Common myeloid progenitor, CD34-positive (primary cell): ENCODE measurements at regions of chr15 and their contacts with region 1.

Region 1: DNA sequence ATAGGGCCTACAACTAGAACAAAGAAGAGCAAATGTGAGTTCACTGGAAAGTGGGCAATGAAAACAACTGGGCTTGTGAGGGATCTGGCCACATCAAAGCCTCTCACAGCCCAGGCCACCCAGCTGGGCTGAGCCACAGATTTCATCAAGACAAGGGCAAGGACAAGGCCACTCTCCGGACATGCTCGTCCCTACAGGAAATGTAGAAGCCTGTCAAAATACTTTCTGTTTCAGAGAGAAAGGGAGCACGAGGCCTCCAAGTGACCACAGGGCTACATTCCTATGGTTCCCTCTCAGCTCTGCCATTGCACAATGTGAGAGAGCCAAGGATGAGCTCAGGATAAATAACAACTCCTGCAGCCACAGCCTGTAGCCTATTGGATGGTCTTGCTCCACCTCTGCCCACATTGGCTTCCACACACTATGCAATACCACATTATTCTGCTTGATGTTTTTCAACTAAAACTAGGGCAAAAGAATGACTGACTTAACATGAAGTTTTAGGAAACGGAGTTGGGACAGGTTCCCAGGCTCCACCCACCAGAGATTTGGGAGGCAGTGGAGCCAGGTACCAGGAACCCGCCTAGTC is 12.1 kb downstream of the TBC1D2B start:
- DNase-seq: peak in 2 of 3 donors; percentile 51 to 57
- H3K4me3 ChIP-seq: peak overlapping the region in 4 of 7 experiments; percentile 6 to 29 (median 24)
- H3K27ac ChIP-seq: no peak overlapping the region
- H3K4me1 ChIP-seq: peaks cover 17 to 89% (median 67%) of the 10 kb centered on the region in 4 experiments
- H3K27me3 ChIP-seq: no peaks in the 10 kb centered on the region

Region 2: DNA sequence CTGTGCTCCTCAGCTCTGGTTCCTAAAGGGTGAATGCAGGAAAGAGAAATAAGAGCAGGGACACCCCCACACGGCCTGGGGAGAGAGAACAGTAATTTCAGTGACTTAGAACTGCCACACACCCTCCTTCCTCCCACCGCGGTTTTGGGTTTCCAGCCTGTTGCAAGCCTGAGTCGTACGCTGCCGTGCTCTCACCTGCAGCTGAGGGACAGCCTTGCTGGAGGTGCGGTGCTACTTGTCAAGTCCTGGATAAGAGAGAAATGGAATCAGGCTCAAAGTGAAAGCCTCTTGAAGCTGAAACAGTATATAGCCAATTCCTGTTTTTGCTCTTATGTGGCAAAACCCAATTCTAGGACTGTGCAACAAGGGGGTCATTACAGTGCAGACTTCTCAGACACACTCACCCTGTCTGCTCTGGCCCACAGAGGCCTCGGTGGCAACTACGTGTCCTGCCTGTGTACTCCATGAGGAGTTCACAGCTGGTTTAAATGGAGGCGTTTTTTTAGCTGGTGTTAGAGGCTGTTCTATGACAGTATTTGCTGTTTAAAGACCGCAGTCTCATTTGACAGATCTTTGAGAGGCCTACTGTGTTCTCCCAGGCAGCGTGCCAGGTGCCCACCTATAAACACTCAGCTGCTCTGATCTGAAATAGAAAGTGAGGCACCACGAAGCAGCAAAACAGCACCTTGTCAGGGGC is 30.7 kb before region 1 on chr15:
- CTCF ChIA-PET with region 1: interaction called, 15 read pairs
- POLR2A ChIA-PET with region 1: interaction called, 4 read pairs
- DNase-seq: peak; percentile 48 to 81 (median 71)
- H3K4me3 ChIP-seq: peak overlapping the region in 5 of 7 experiments; percentile 8 to 60 (median 38)
- H3K27ac ChIP-seq: peak overlapping the region; percentile 25 to 64
- H3K4me1 ChIP-seq: peaks cover 47 to 84% (median 74%) of the 10 kb centered on the region in 4 experiments
- H3K27me3 ChIP-seq: no peaks in the 10 kb centered on the region

Region 3: DNA sequence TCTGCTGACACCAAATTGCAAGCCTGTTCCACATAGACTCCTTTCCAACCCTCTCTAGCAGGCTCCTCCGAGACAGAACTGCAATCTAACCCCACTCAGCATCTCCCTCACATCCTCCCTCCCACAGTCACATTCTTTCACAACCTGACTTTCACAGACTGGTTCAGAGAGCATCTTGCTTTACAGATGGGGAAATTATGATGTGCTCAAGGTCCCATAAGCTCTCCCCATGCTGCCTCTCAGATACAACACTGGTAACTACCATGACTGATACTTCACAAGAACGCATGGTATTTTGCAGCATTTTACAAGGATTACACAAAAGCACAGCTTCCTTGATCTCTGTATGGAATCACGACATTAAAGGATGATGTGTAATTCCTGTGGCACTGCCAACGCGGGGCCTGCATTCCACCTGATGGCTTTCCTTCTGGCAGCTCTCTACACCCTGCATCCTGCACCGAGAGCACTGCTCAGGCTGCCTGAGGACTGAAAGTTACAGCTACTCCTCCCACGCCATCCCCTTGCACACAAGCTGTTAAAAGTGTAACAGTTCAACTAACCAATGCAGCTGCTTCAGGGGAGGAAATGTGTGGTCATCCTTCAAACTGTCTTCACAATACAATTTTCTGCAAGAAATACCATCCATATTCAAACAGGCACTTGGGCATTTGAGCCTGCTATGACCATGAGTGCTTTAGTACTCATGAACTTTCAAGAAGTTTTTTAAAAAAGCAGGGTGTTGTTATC is 15.5 kb before region 1 on chr15:
- CTCF ChIA-PET with region 1: interaction called, 62 read pairs
- POLR2A ChIA-PET with region 1: interaction called, 5 read pairs
- DNase-seq: peak in 2 of 3 donors; percentile 78 to 87
- H3K4me3 ChIP-seq: peak overlapping the region in 5 of 7 experiments; percentile 5 to 52 (median 9)
- H3K27ac ChIP-seq: peak overlapping the region; percentile 3 to 52
- H3K4me1 ChIP-seq: peaks cover 57 to 98% (median 84%) of the 10 kb centered on the region in 4 experiments
- H3K27me3 ChIP-seq: no peaks in the 10 kb centered on the region